PC-3 (cell line): ENCODE measurements at regions of chr1 and their contacts with region 1.

Region 1: DNA sequence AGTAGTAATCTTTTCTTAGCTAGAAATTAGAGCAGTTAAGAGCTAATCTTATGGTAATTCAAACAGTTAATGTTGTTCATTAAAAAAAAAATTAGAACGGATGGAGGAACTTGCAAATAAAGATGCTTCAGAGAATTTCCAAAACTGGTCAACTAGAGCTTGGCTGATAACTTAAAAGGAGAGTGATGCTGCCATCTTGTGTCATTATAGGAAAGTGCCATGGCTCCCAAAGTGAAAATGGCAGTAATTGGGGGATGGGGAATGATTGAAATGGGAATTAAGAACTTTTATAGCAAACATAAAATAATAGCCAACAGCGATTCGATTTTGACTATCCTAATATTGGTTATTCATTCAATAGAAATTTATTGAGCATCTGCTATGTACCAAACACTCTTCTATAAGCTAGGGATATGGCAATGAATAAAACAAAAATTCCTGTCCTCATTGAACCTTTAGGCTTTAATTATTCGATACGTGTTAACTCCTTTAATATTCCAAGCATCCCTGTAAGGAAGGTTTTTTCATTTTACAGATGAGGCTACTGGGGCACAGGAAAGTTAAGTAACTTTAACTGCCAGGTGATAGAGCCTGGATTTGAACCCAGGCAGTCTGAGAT is 5.7 kb upstream of the PLPP3 start:
- DNase-seq: peak; percentile 78
- ATAC-seq: peak; percentile 61
- H3K4me3 ChIP-seq: no peak overlapping the region
- H3K27ac ChIP-seq: no peak overlapping the region
- H3K4me1 ChIP-seq: peaks cover 5% of the 10 kb centered on the region; the same call in 1 of the 2 replicates
- H3K27me3 ChIP-seq: no peaks in the 10 kb centered on the region
- CTCF ChIP-seq: peak; percentile 90

Region 2: DNA sequence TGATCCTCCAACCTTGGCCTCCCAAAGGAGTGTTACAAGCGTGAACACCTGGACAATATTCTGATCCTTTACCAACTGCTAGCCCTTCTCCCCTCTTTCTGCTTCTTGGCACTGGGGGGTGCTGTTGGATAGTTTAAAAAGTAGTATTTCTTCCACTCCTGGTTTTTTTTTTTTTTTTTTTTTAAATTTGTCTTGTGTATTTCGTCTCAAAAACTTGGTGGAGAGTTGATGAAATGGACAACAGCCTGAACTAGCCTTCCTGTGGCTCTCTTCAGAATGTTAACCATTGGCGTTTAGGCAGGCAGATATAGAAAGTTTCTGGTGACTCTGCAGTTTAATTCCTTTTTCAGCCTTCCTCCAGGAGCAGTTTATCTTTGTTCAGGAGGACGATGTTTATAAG is 1300.2 kb before region 1 on chr1:
- CTCF ChIA-PET with region 1: no interaction called
- POLR2A ChIA-PET with region 1: no interaction called
- intact Hi-C with region 1: loop called (anchors 1 kb)
- DNase-seq: peak; percentile 67
- ATAC-seq: peak; percentile 68
- H3K4me3 ChIP-seq: no peak overlapping the region
- H3K27ac ChIP-seq: no peak overlapping the region
- H3K4me1 ChIP-seq: peaks cover 10% of the 10 kb centered on the region
- H3K27me3 ChIP-seq: no peaks in the 10 kb centered on the region
- CTCF ChIP-seq: peak; percentile 82

Region 3: GRCh38 chr1:55375617-55376258 is 1209.3 kb before region 1 on chr1:
- CTCF ChIA-PET with region 1: interaction called, 3 read pairs
- POLR2A ChIA-PET with region 1: no interaction called
- intact Hi-C with region 1: loop called (anchors 2 kb)
- DNase-seq: peak; percentile 58
- ATAC-seq: peak; percentile 21
- H3K4me3 ChIP-seq: no peak overlapping the region; the same call in 1 of the 2 replicates
- H3K27ac ChIP-seq: peak overlapping the region; percentile 90
- H3K4me1 ChIP-seq: peaks cover 49% of the 10 kb centered on the region
- H3K27me3 ChIP-seq: no peaks in the 10 kb centered on the region
- CTCF ChIP-seq: peak; percentile 95

Region 4: DNA sequence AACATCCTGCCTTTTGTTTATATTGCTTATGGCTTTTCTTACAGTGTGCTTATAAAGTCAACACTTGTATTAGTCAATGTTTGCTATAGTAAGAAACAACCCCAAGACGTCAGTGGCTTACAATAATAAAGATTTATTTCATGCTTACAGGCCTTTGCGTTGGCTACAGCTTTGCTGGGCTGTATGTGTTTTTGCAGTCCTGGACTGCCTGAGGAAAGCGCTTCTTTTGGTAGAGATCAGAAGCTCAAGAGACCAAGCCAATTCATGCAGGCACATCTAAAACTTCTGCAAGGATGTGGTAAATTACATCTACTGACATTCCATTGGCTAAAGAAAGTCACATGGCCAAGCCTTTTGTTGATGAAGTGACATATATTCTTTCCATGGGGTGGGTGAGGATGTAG is 42.6 kb after region 1 on chr1:
- CTCF ChIA-PET with region 1: no interaction called
- POLR2A ChIA-PET with region 1: no interaction called
- intact Hi-C with region 1: loop called (anchors 5 kb)
- DNase-seq: peak; percentile 80
- ATAC-seq: peak; percentile 89
- H3K4me3 ChIP-seq: no peak overlapping the region
- H3K27ac ChIP-seq: peak overlapping the region; percentile 84
- H3K4me1 ChIP-seq: peaks cover 44% of the 10 kb centered on the region
- H3K27me3 ChIP-seq: no peaks in the 10 kb centered on the region
- CTCF ChIP-seq: no peak

Region 5: DNA sequence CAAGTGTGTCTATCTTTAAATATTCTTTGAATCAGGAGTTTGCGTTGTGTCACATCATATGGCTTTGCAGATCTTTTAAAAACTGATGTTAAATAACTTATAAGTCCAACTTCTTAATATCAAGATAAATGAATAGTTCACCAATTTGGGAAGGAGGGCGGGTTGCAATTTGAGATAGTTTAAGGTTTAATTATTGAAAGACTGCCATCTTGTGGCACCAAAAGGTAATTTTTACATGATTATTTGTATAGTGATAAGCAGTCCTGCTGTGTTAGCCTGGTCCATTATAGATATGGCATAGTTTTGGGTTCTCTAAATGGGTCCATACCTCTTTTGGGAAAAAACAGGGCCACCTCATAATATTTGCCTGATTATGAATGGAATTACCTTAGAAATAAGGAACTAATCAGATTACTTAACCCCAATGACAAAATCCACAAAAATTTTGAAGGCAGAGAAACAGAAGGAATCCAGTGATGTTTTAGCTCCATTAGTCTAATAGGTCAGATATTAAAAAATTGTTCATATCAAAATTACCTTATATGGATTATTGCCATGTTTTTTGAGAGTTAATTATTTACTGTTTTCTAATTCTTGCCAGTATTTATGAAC is 124.4 kb after region 1 on chr1:
- CTCF ChIA-PET with region 1: no interaction called
- POLR2A ChIA-PET with region 1: no interaction called
- intact Hi-C with region 1: loop called (anchors 1 kb)
- DNase-seq: peak; percentile 87
- ATAC-seq: peak; percentile 70
- H3K4me3 ChIP-seq: no peak overlapping the region
- H3K27ac ChIP-seq: no peak overlapping the region
- H3K4me1 ChIP-seq: peaks cover 15% of the 10 kb centered on the region
- H3K27me3 ChIP-seq: no peaks in the 10 kb centered on the region
- CTCF ChIP-seq: peak; percentile 77

Region 6: DNA sequence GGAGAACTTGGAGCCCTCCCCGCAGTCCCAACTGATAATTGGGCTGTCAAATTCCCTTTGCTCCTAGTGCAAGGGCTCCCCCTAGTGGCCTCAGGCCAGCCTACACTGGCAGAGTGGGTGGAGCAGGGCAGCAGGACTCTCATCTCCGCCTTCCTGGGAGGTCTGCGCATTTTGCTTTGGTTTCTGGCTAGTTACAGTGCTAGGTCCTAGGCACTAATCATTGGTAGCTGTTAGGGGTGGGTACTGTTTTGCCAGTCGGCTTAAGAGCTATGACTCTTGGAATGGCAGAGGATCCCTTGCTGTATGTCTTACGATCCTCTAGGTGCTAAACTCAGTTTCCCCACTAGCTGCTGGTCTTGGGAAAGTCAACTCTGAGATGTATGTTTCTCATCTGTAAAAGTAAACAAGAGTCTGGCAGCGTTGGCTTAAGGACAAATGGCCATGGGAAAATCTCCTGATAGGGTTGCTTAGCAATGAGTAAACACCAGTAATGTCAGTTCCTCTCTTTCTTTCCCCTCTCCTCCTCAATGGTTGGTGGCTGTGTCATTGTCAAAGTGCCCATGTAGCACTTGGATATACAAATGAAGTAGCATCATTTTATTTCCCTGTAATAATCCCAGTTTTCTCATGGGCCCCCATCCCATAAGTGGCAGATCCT is 236.2 kb after region 1 on chr1:
- CTCF ChIA-PET with region 1: interaction called, 4 read pairs
- POLR2A ChIA-PET with region 1: no interaction called
- intact Hi-C with region 1: loop called (anchors 2 kb)
- DNase-seq: peak; percentile 89
- ATAC-seq: peak; percentile 85
- H3K4me3 ChIP-seq: peak overlapping the region; percentile 46; the same call in 1 of the 2 replicates
- H3K27ac ChIP-seq: peak overlapping the region; percentile 44
- H3K4me1 ChIP-seq: peaks cover 14% of the 10 kb centered on the region
- H3K27me3 ChIP-seq: 0 out of 2 replicates have a peak, but pooled peaks cover 5% of the 10 kb centered on the region
- CTCF ChIP-seq: peak; percentile 97